ENCODE measurements at regions of chr10 and their contacts with region 1.

Region 1: GRCh38 chr10:96513698-96514561 is at the start of gene TLL2:
- DNase-seq: peak; percentile 75
- ATAC-seq: peak; percentile 91
- H3K4me3 ChIP-seq: peak within 1 kb of the TSS; percentile 55 to 71 (median 57)
- H3K27ac ChIP-seq: no peak within 1 kb of the TSS
- H3K4me1 ChIP-seq: peaks cover 35% of the 10 kb centered on the region
- H3K27me3 ChIP-seq: peaks cover 0 to 26% of the 10 kb centered on the region in 2 experiments; a peak in 4 of 5 replicates
- CTCF ChIP-seq: peak; percentile 82
- EP300 ChIP-seq: no peak
- POLR2A ChIP-seq: no peak
- RAD21 ChIP-seq: peak; percentile 80
- total RNA-seq, gene TLL2: 0.09 TPM in 1 of 2 replicates, not detected in the other

Region 2: GRCh38 chr10:96374985-96375830 is 138.7 kb before region 1 on chr10:
- CTCF ChIA-PET with region 1: interaction called, 5 read pairs
- POLR2A ChIA-PET with region 1: no interaction called
- in situ Hi-C with region 1: no loop called
- intact Hi-C with region 1: loop called (anchors 5 kb)
- DNase-seq: peak; percentile 78
- ATAC-seq: peak; percentile 89
- H3K4me3 ChIP-seq: peak overlapping the region in 2 of 3 experiments; percentile 12 to 53; a peak in 4 of 6 replicates
- H3K27ac ChIP-seq: no peak overlapping the region
- H3K4me1 ChIP-seq: peaks cover 11% of the 10 kb centered on the region
- H3K27me3 ChIP-seq: peaks cover 2 to 22% of the 10 kb centered on the region in 2 experiments; a peak in 3 of 5 replicates
- CTCF ChIP-seq: peak; percentile 95
- EP300 ChIP-seq: no peak
- POLR2A ChIP-seq: no peak
- RAD21 ChIP-seq: peak; percentile 88

Region 3: DNA sequence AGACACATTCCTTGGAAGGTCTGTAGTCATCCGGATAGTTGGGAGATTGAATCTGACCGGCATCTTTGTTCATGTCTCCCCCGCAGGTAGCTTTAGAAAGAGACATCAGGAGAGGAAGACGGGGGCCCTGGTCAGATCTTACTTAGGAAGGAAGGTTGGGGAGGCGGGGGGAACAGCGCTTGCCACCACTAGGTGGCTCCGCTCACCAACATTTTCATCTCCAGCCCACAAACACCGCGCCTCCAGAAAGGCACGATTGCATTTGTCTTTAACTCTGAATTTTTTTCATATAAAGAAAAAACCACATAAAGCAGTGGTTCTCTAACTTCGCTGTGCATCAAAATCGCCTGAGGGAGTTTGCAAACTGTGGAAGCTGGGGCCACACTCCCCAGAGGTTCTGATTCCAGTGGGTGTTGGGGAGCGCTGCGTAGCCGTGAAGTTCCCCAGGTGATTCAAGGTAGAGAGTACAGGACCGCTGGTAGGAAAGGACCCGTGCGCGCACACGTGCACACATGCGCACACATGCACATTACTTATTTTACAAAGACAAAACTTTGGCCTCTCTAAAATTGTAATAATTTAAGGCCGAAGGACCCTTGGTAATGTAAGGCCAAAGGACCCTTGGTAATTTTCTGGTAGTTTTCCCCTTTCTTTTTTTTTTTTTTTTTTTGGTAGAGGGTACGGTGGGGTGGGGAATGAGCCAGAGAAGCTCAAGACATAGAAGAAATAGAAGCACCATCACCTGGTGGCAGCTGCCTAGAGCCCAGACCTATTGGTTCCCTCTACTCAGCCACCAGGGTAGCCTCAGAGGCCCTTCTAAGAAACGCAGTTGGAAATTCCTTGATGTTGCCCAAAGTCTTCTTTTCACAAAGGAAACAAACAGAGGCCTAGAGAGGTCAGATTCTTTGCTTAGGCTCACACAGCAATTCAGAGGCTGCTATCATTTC is 117.7 kb before region 1 on chr10:
- CTCF ChIA-PET with region 1: interaction called, 10 read pairs
- POLR2A ChIA-PET with region 1: no interaction called
- in situ Hi-C with region 1: loop called (anchors 5 kb)
- intact Hi-C with region 1: loop called (anchors 1 kb)
- DNase-seq: peak; percentile 41
- ATAC-seq: peak; percentile 92
- H3K4me3 ChIP-seq: peak overlapping the region in 1 of 3 experiments; percentile 20; a peak in 1 of 6 replicates
- H3K27ac ChIP-seq: no peak overlapping the region
- H3K4me1 ChIP-seq: no peaks in the 10 kb centered on the region
- H3K27me3 ChIP-seq: peaks cover 7 to 82% of the 10 kb centered on the region in 2 experiments
- CTCF ChIP-seq: peak; percentile 84
- EP300 ChIP-seq: no peak
- POLR2A ChIP-seq: no peak
- RAD21 ChIP-seq: peak; percentile 71

Region 4: GRCh38 chr10:96470116-96470743 is 43.7 kb before region 1 on chr10:
- CTCF ChIA-PET with region 1: interaction called, 3 read pairs
- POLR2A ChIA-PET with region 1: no interaction called
- in situ Hi-C with region 1: no loop called
- intact Hi-C with region 1: loop called (anchors 1 kb)
- DNase-seq: peak; percentile 18
- ATAC-seq: peak; percentile 91
- H3K4me3 ChIP-seq: no peak overlapping the region
- H3K27ac ChIP-seq: no peak overlapping the region
- H3K4me1 ChIP-seq: no peaks in the 10 kb centered on the region
- H3K27me3 ChIP-seq: peaks cover 4 to 34% of the 10 kb centered on the region in 2 experiments; a peak in 3 of 5 replicates
- CTCF ChIP-seq: peak; percentile 62
- EP300 ChIP-seq: no peak
- POLR2A ChIP-seq: no peak
- RAD21 ChIP-seq: no peak

Region 5: DNA sequence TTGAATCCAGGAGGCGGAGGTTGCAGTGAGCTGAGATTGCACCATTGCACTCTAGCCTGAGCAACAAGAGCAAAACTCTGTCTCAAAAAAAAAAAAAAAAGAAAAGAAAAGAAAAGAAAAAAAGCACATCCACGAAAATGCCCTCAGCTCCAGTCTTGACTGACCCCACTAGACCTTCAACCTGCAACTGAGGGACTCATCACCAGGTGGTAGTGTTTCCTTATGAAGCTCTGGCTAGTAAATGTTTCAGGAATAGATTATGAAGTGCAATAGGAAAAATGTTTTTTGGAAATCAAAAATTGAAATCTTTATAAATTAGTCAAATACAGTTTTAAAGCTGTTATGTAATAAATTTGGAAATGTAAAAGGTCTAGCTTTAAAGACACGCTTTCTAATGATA is 22.6 kb before region 1 on chr10:
- CTCF ChIA-PET with region 1: interaction called, 8 read pairs
- POLR2A ChIA-PET with region 1: no interaction called
- in situ Hi-C with region 1: no loop called
- intact Hi-C with region 1: loop called (anchors 1 kb)
- DNase-seq: no peak
- ATAC-seq: peak; percentile 61
- H3K4me3 ChIP-seq: no peak overlapping the region
- H3K27ac ChIP-seq: no peak overlapping the region
- H3K4me1 ChIP-seq: no peaks in the 10 kb centered on the region
- H3K27me3 ChIP-seq: peaks cover 5 to 34% of the 10 kb centered on the region in 2 experiments; a peak in 4 of 5 replicates
- CTCF ChIP-seq: peak; percentile 65
- EP300 ChIP-seq: no peak
- POLR2A ChIP-seq: no peak
- RAD21 ChIP-seq: peak; percentile 37; the same call in 1 of the 2 replicates